Mammary epithelial cell (primary cell): ENCODE measurements at regions of chr16 and their contacts with region 1.

Region 1: DNA sequence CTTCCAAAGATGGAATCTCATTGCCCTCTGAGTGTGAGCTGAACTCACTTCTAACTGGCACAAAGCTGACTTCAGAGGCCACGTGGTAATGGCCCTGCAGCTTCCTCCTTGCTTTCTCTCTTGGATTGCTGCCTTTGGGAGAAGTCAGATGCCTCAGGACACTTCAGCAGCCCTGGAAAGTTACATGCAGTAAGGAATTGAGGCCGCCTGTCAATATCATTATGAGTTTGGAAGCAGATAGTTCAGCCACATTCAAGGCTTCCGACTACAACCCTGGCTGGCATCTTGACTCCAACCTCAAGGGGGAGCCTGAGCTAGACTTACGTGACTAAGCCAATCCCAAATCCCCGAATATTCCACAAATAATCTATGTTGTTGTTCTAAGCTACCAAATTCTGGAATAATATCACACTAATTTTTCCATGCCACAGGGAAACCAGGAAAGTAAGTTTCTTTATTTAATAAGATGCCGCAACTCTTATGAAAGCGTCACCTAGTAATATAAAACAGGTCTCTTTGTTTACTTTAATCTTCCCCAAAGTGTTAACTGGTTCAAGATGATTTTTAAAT is 13.6 kb downstream of the CEP20 start:
- DNase-seq: peak; percentile 56
- H3K4me3 ChIP-seq: no peak overlapping the region
- H3K27ac ChIP-seq: no peak overlapping the region
- H3K4me1 ChIP-seq: peaks cover 10% of the 10 kb centered on the region
- H3K27me3 ChIP-seq: no peaks in the 10 kb centered on the region
- CTCF ChIP-seq: peak; percentile 86 to 90

Region 2: GRCh38 chr16:15466886-15467781 is 407.7 kb before region 1 on chr16:
- CTCF ChIA-PET with region 1: no interaction called
- dilution Hi-C with region 1: no loop called
- in situ Hi-C with region 1: no loop called
- intact Hi-C with region 1: no loop called
- DNase-seq: no peak
- H3K4me3 ChIP-seq: no peak overlapping the region
- H3K27ac ChIP-seq: no peak overlapping the region
- H3K4me1 ChIP-seq: peaks cover 6% of the 10 kb centered on the region
- H3K27me3 ChIP-seq: no peaks in the 10 kb centered on the region
- CTCF ChIP-seq: peak; percentile 45

Region 3: DNA sequence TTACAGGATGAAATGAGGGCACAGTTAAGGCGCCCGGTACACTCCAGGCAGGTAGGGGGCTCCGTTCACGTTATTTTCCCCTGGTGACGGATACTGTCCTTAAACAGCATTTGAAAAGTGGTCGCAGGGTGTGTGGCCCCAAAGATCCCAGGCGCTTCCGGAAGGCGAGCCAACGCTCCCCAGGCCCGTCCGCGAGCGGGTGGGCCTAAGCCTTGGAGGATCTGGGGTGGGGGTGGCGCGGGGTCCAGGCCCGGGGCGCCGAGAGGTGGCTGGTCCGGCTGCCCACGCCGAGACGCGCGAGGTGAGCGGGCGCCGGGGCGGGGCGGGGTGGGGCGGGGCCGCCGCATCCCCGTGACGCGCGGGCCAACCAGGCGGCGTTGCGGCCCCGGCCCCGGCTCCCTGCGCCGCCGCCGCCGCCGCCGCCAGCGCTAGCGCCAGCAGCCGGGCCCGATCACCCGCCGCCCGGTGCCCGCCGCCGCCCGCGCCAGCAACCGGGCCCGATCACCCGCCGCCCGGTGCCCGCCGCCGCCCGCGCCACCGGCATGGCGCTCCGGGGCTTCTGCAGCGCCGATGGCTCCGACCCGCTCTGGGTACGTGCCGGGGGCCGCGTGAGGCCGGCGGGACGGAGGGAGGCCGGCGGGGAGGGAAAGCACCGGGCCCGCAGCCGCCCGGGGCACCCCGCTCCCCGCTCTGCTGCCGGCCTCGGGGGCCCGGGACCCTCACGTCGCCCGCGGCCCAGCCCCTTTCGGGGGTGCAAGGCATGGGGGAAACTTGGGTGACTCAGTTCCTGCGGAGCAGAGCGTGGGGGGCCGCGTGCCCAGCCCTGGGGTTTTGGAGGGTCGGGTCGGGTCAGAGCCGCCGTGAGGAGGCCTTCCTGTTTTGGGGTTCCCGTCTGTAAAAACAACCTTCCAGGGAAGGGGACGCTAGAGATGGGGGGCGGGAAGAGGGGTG is 74.7 kb after region 1 on chr16 and contains the start of gene ABCC1:
- CTCF ChIA-PET with region 1: no interaction called
- dilution Hi-C with region 1: no loop called
- in situ Hi-C with region 1: no loop called
- intact Hi-C with region 1: loop called (anchors 1 kb)
- DNase-seq: peak; percentile 38
- H3K4me3 ChIP-seq: peak within 1 kb of the TSS; percentile 71 to 90 (median 79)
- H3K27ac ChIP-seq: peak within 1 kb of the TSS; percentile 87
- H3K4me1 ChIP-seq: peaks cover 27% of the 10 kb centered on the region
- H3K27me3 ChIP-seq: no peaks in the 10 kb centered on the region
- CTCF ChIP-seq: no peak
- total RNA-seq, gene ABCC1: 45.5 to 47.2 TPM

Region 4: DNA sequence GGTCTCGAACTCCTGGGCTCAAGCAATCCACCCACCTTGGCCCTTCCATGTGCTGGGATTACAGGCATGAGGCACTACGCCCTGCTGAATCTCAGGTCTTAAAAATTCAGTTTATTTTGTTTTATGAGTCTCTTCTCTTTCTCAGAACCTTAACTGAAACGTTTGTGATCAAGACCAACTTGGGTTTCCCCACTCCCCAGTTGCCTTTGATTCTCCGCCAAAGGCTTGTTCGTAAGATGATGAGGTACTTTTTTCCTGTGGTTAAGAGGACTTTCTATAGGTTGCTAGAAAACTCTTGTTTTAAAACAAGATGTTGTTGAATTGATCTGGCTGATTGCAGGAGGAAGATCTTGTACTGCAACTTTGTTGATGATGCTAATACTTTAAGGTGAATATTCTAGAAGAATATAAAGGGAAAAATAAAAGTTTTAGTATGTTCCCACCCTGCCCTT is 86.3 kb after region 1 on chr16:
- CTCF ChIA-PET with region 1: no interaction called
- dilution Hi-C with region 1: no loop called
- in situ Hi-C with region 1: loop called in 1 of 2 experiments (anchors 5 kb)
- intact Hi-C with region 1: no loop called
- DNase-seq: no peak
- H3K4me3 ChIP-seq: no peak overlapping the region
- H3K27ac ChIP-seq: no peak overlapping the region
- H3K4me1 ChIP-seq: peaks cover 9% of the 10 kb centered on the region
- H3K27me3 ChIP-seq: no peaks in the 10 kb centered on the region
- CTCF ChIP-seq: no peak

Region 5: DNA sequence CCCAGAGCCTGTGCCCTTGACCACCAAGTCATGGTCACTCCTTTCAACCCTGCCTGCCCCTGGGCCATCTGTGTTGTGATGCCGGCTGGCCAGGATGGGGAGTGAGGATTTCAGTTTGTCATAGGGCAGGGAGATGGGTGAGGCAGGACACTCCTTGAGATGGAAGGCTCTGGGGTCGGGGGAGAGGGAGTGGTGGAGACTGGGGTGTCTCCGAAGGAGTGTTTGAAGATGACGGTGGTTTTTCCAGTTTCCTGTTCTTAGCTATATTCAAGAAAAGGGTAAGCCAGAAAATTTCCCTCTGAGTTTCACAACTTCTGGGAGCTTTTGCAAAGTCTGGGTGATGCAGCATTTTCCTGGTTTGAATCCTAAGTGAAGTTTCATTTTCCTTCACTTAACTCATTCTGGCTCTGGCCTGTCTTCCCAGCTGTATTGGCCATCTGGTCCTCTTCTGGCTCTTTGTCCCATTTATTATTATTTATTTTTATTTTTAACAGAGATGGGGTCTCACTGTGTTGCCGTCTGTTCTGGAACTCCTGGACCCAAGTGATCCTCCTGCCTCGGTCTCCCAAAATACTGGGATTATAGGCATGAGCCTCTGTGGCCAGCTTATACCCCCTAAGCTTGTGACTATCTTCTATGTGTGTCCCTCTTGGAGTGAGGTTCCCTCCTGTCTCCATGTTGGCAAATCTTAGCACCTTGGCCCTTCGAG is 102.3 kb after region 1 on chr16:
- CTCF ChIA-PET with region 1: no interaction called
- dilution Hi-C with region 1: no loop called
- in situ Hi-C with region 1: no loop called
- intact Hi-C with region 1: no loop called
- DNase-seq: no peak
- H3K4me3 ChIP-seq: no peak overlapping the region
- H3K27ac ChIP-seq: no peak overlapping the region
- H3K4me1 ChIP-seq: no peaks in the 10 kb centered on the region
- H3K27me3 ChIP-seq: no peaks in the 10 kb centered on the region
- CTCF ChIP-seq: no peak

Region 6: DNA sequence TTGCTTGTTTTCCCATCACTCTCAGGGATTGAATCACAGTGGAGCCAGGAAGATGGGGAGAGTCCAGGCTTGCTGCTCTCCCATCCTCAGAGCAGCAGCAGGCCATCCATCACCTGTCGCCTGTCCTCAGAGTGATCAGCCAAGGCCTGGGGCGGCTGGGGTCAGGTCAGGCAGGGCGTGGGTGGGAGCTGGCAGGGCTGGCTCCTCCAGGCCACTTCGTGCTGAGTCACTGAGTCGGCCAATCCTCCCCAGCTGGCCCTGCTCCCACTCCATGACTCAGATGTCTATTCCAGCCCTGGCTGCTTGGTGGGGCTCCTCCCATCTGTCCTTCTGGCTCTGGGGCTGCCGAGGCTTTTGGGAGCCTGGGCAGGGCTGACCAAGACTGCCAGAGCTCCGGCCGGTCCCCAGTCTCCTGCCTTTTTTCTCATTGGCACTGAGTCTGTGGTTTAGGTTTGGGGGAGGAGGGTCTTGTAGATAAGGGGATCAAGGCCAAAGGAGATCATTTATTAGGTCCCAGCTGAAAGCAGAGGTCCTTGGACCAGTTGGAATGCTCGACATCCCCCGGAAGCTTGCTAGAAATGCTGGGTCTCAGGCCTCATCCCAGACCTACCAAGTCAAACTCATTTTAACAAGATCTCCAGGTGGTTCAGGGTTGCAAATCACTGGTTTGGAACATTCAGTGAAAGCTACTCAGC is 147.3 kb after region 1 on chr16:
- CTCF ChIA-PET with region 1: no interaction called
- dilution Hi-C with region 1: no loop called
- in situ Hi-C with region 1: loop called in 1 of 2 experiments (anchors 5 kb)
- intact Hi-C with region 1: loop called (anchors 5 kb)
- DNase-seq: peak; percentile 93
- H3K4me3 ChIP-seq: no peak overlapping the region
- H3K27ac ChIP-seq: peak overlapping the region; percentile 62
- H3K4me1 ChIP-seq: peaks cover 29% of the 10 kb centered on the region
- H3K27me3 ChIP-seq: no peaks in the 10 kb centered on the region
- CTCF ChIP-seq: no peak

Region 7: GRCh38 chr16:16191493-16192167 is 316.8 kb after region 1 on chr16:
- CTCF ChIA-PET with region 1: no interaction called
- dilution Hi-C with region 1: no loop called
- in situ Hi-C with region 1: no loop called
- intact Hi-C with region 1: loop called (anchors 2 kb)
- DNase-seq: no peak
- H3K4me3 ChIP-seq: no peak overlapping the region
- H3K27ac ChIP-seq: no peak overlapping the region
- H3K4me1 ChIP-seq: no peaks in the 10 kb centered on the region
- H3K27me3 ChIP-seq: no peaks in the 10 kb centered on the region
- CTCF ChIP-seq: no peak